ENCODE measurements at regions of chr12 and their contacts with region 1.

Region 1: GRCh38 chr12:48197971-48198671 is 5.0 kb downstream of the OR10AD1 start:
- DNase-seq: peak; percentile 91
- H3K4me3 ChIP-seq: peak overlapping the region; percentile 67 to 83
- H3K27ac ChIP-seq: peak overlapping the region; percentile 64 to 96
- H3K4me1 ChIP-seq: peaks cover 7 to 19% of the 10 kb centered on the region in 2 experiments
- H3K27me3 ChIP-seq: no peaks in the 10 kb centered on the region
- CTCF ChIP-seq: no peak
- EP300 ChIP-seq: no peak
- RAD21 ChIP-seq: no peak; the same call in 1 of the 2 replicates

Region 2: DNA sequence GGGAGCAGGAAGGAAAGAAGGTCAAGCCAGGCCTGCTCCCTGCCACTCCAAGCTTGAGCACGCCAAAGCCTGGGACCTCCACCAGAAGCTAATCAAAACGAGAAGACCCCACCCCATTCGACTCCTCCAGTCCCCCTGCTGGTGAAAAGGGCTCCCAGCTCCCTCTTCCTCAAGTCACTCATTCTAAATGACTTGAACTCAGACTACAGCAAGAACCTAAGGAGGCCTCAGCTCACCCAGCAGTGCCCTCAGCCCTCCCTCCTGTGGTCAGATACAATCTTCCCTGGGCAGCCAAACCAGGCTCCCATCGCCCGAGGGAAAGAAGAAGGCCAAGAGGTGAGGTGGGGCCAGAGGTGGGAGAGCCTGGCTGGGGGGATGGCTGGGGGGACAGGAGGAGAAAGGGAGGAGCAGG is 395.8 kb before region 1 on chr12:
- CTCF ChIA-PET with region 1: no interaction called
- POLR2A ChIA-PET with region 1: no interaction called
- DNase-seq: peak; percentile 52
- H3K4me3 ChIP-seq: no peak overlapping the region
- H3K27ac ChIP-seq: no peak overlapping the region; a peak in 1 of 4 replicates
- H3K4me1 ChIP-seq: peaks cover 18 to 41% of the 10 kb centered on the region in 2 experiments; a peak in 2 of 4 replicates
- H3K27me3 ChIP-seq: no peaks in the 10 kb centered on the region
- CTCF ChIP-seq: peak; percentile 39
- EP300 ChIP-seq: no peak
- RAD21 ChIP-seq: no peak

Region 3: GRCh38 chr12:48157018-48157888 is 40.9 kb before region 1 on chr12 and contains the start of gene ASB8:
- CTCF ChIA-PET with region 1: interaction called, 18 read pairs
- POLR2A ChIA-PET with region 1: no interaction called
- DNase-seq: peak; percentile 97
- H3K4me3 ChIP-seq: peak within 1 kb of the TSS; percentile 91 to 97
- H3K27ac ChIP-seq: peak within 1 kb of the TSS; percentile 59 to 92; a peak in 3 of 4 replicates
- H3K4me1 ChIP-seq: peaks cover 0 to 8% of the 10 kb centered on the region in 2 experiments; a peak in 2 of 4 replicates
- H3K27me3 ChIP-seq: no peaks in the 10 kb centered on the region
- CTCF ChIP-seq: peak; percentile 49
- EP300 ChIP-seq: no peak
- RAD21 ChIP-seq: peak; percentile 28; the same call in 1 of the 2 replicates
- polyA plus RNA-seq, gene ASB8: 13.8 and 16.9 TPM in 2 replicates